ENCODE measurements at regions of chr1 and their contacts with region 1.

Region 1: DNA sequence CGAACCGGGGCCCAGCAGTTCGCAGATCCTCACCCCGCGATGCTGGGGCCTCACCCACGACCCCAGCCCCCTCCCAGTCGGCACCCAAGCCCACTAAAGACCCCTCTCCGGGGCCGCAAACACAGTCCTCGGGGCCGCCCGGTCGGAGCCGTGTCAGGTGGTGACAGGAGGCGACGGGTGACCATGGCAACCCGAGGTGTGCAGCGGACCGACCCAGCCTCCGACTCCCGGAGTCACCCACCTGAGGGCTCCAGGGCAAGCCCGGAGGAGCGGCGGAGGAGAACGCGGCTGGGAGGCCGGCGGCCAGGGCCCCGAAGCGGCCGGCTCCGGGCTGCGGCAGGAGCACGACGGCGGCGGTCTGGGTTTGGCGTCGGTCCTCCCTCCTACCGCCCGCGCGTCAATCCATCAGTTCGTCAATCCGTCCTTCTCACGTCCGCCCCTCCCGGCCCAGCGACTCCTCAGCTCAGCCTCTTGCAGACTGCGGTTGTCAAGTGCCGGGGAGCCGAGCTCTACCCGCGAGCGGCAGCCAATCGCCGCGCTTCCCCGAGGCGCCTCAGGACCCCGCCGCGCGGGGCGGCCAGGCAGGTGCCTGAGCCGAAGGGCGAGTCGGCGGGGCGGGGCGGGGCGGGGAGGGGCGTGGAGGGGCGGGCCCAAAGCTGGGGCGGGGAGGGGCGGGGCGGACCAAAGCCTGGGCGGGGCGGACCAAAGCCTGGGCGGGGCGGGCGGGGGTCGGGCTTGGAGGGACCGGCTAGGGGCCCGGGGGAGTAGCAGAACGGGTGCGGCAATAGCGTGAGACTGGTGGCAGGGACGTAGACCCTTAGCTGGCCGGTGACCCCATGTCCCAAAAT is at the start of gene WDR47:
- DNase-seq: peak; percentile 91 to 99 (median 95)
- ATAC-seq: peak; percentile 97
- H3K4me3 ChIP-seq: peak within 1 kb of the TSS; percentile 99
- H3K4me3 Mint-ChIP-seq: peak within 1 kb of the TSS; percentile 97
- H3K27ac ChIP-seq: peak within 1 kb of the TSS; percentile 69 to 79
- H3K27ac Mint-ChIP-seq: peak within 1 kb of the TSS; percentile 91
- H3K4me1 ChIP-seq: peaks cover 14% of the 10 kb centered on the region
- H3K4me1 Mint-ChIP-seq: peaks cover 22% of the 10 kb centered on the region
- H3K27me3 ChIP-seq: no peaks in the 10 kb centered on the region
- H3K27me3 Mint-ChIP-seq: no peaks in the 10 kb centered on the region
- CTCF ChIP-seq: no peak
- total RNA-seq, gene WDR47: 16.2 to 18.7 TPM

Region 2: DNA sequence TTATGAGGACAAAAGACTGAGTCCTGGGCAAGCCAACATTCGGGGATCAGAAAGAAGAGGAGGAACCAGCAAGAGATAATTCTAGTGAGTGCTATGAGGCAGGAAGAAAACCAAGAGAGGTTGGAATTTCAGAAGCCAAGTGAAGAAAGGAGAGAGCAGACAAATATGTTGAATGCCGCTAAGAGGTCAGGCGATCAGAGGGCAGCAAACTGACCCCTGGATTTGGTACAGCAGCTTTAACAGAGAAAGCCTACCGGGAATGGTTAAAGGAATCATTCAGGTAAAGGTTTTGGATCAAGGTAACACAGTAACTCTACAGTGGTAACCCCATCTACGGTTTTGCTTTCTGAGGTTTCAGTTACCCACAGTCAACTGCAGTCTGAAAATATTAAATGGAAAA is 84.0 kb before region 1 on chr1:
- CTCF ChIA-PET with region 1: interaction called, 3 read pairs
- POLR2A ChIA-PET with region 1: interaction called, 20 read pairs
- intact Hi-C with region 1: loop called (anchors 2 to 5 kb)
- DNase-seq: no peak
- ATAC-seq: no peak
- H3K4me3 ChIP-seq: no peak overlapping the region
- H3K4me3 Mint-ChIP-seq: no peak overlapping the region
- H3K27ac ChIP-seq: no peak overlapping the region
- H3K27ac Mint-ChIP-seq: no peak overlapping the region
- H3K4me1 ChIP-seq: peaks cover 51% of the 10 kb centered on the region
- H3K4me1 Mint-ChIP-seq: peaks cover 58% of the 10 kb centered on the region
- H3K27me3 ChIP-seq: no peaks in the 10 kb centered on the region
- H3K27me3 Mint-ChIP-seq: no peaks in the 10 kb centered on the region
- CTCF ChIP-seq: no peak

Region 3: DNA sequence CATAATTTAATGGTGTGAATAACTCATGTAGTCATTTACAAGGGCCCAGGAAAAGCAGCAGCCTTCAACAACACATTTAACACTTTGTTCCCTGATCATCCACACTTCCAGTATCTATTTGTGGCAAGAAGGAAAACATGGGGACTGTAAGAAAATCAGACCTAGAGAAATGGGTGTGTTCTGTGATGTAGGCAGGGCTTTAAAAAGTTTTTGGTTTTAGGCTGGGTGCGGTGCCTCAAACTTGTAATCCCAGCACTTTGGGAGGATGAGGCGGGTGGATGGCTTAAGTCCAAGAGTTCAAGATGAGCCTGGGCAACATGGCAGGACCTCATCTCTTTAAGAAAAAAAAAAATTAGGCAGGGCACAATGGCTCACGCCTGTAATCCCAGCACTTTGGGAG is 14.2 kb after region 1 on chr1:
- CTCF ChIA-PET with region 1: no interaction called
- POLR2A ChIA-PET with region 1: no interaction called
- intact Hi-C with region 1: no loop called
- DNase-seq: no peak
- ATAC-seq: no peak
- H3K4me3 ChIP-seq: no peak overlapping the region
- H3K4me3 Mint-ChIP-seq: no peak overlapping the region
- H3K27ac ChIP-seq: no peak overlapping the region
- H3K27ac Mint-ChIP-seq: no peak overlapping the region
- H3K4me1 ChIP-seq: no peaks in the 10 kb centered on the region
- H3K4me1 Mint-ChIP-seq: no peaks in the 10 kb centered on the region
- H3K27me3 ChIP-seq: no peaks in the 10 kb centered on the region
- H3K27me3 Mint-ChIP-seq: no peaks in the 10 kb centered on the region
- CTCF ChIP-seq: no peak

Region 4: GRCh38 chr1:109075531-109076490 is 34.0 kb after region 1 on chr1 and contains the start of gene TAF13:
- CTCF ChIA-PET with region 1: no interaction called
- POLR2A ChIA-PET with region 1: interaction called, 35 read pairs
- intact Hi-C with region 1: loop called in 1 of 2 experiments (anchors 2 kb)
- DNase-seq: peak; percentile 69 to 93 (median 82)
- ATAC-seq: peak; percentile 94
- H3K4me3 ChIP-seq: peak within 1 kb of the TSS; percentile 88
- H3K4me3 Mint-ChIP-seq: peak within 1 kb of the TSS; percentile 95
- H3K27ac ChIP-seq: peak within 1 kb of the TSS; percentile 92 to 94
- H3K27ac Mint-ChIP-seq: peak within 1 kb of the TSS; percentile 99
- H3K4me1 ChIP-seq: peaks cover 12% of the 10 kb centered on the region
- H3K4me1 Mint-ChIP-seq: peaks cover 14% of the 10 kb centered on the region
- H3K27me3 ChIP-seq: no peaks in the 10 kb centered on the region
- H3K27me3 Mint-ChIP-seq: no peaks in the 10 kb centered on the region
- CTCF ChIP-seq: no peak
- total RNA-seq, gene TAF13: 25.9 to 26.5 TPM

Region 5: GRCh38 chr1:109099938-109100773 is 58.3 kb after region 1 on chr1:
- CTCF ChIA-PET with region 1: interaction called, 12 read pairs
- POLR2A ChIA-PET with region 1: interaction called, 68 read pairs
- intact Hi-C with region 1: loop called in 1 of 2 experiments (anchors 2 kb)
- DNase-seq: peak; percentile 96 to 98 (median 97)
- ATAC-seq: peak; percentile 93
- H3K4me3 ChIP-seq: peak overlapping the region; percentile 94
- H3K4me3 Mint-ChIP-seq: peak overlapping the region; percentile 95
- H3K27ac ChIP-seq: peak overlapping the region; percentile 86 to 89
- H3K27ac Mint-ChIP-seq: peak overlapping the region; percentile 92
- H3K4me1 ChIP-seq: peaks cover 22% of the 10 kb centered on the region
- H3K4me1 Mint-ChIP-seq: peaks cover 12% of the 10 kb centered on the region
- H3K27me3 ChIP-seq: no peaks in the 10 kb centered on the region
- H3K27me3 Mint-ChIP-seq: no peaks in the 10 kb centered on the region
- CTCF ChIP-seq: peak; percentile 87

Region 6: GRCh38 chr1:109426278-109427170 is 384.7 kb after region 1 on chr1 and contains the start of gene PSMA5:
- CTCF ChIA-PET with region 1: no interaction called
- POLR2A ChIA-PET with region 1: no interaction called
- intact Hi-C with region 1: loop called in 1 of 2 experiments (anchors 5 kb)
- DNase-seq: peak; percentile 87 to 99 (median 92)
- ATAC-seq: peak; percentile 91
- H3K4me3 ChIP-seq: peak within 1 kb of the TSS; percentile 98
- H3K4me3 Mint-ChIP-seq: peak within 1 kb of the TSS; percentile 98
- H3K27ac ChIP-seq: peak within 1 kb of the TSS; percentile 91 to 95
- H3K27ac Mint-ChIP-seq: peak within 1 kb of the TSS; percentile 98
- H3K4me1 ChIP-seq: peaks cover 33% of the 10 kb centered on the region
- H3K4me1 Mint-ChIP-seq: peaks cover 52% of the 10 kb centered on the region
- H3K27me3 ChIP-seq: no peaks in the 10 kb centered on the region
- H3K27me3 Mint-ChIP-seq: no peaks in the 10 kb centered on the region
- CTCF ChIP-seq: no peak
- total RNA-seq, gene PSMA5: 29.8 to 33.8 TPM

Measured in CD4-positive, alpha-beta T cell (primary cell).